SK-N-SH (cell line): ENCODE measurements at regions of chr5 and their contacts with region 1.

Region 1: DNA sequence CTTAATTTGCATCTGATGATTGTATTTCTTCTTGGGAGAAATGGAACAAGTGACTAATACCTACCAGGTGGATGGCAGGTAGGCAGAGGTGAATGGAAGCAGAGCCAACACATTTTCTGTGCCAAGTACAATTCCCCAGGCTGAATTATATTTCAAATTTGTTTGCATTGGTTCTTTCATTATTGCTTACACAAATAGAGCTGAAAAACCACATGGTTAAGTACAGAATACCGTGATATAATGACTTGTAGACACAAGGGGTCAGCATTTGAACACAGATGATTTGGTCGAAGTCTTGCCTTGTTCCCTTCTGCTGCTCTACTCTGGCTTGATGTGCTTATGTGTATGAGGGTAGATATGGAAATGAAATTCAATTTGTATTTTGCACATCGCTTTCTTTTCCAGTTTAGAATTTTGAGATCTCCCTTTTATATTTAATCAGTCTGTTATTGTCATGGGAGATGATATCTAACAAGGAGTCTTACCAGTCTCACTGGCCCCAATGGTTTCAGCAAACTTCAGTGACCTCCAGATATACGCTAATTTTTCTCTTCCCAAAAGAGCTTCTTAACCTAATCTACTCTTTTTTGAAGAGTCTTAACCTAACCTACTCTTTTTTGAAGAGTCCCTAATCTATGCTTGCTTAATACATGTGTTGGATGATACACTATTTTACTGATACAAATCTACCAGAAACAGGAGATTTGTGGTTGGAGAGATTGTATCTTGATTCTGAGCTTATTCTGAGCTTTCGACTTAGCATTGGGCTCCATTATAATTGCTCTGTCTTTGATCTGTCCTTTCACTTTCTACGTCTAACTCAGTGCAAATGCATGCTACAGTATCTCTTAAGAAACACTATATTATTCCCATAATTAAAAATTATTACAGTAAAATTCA is 88.1 kb downstream of the PCSK1 start:
- DNase-seq: peak; percentile 36
- H3K4me3 ChIP-seq: no peak overlapping the region; a peak in 1 of 4 replicates
- H3K27ac ChIP-seq: no peak overlapping the region
- H3K4me1 ChIP-seq: peaks cover 0 to 17% of the 10 kb centered on the region in 2 experiments; a peak in 3 of 4 replicates
- H3K27me3 ChIP-seq: no peaks in the 10 kb centered on the region
- CTCF ChIP-seq: peak; percentile 75
- EP300 ChIP-seq: no peak
- RAD21 ChIP-seq: peak; percentile 97

Region 2: GRCh38 chr5:95858661-95859326 is 486.1 kb before region 1 on chr5:
- CTCF ChIA-PET with region 1: interaction called, 19 read pairs
- POLR2A ChIA-PET with region 1: no interaction called
- DNase-seq: peak; percentile 93
- H3K4me3 ChIP-seq: peak overlapping the region; percentile 36 to 45
- H3K27ac ChIP-seq: peak overlapping the region; percentile 71 to 95
- H3K4me1 ChIP-seq: peaks cover 2 to 35% of the 10 kb centered on the region in 2 experiments; a peak in 3 of 4 replicates
- H3K27me3 ChIP-seq: no peaks in the 10 kb centered on the region
- CTCF ChIP-seq: peak; percentile 98
- EP300 ChIP-seq: peak in 1 of 2 experiments; percentile 80; a peak in 1 of 4 replicates
- RAD21 ChIP-seq: peak; percentile 97

Region 3: GRCh38 chr5:96226941-96227552 is 117.9 kb before region 1 on chr5:
- CTCF ChIA-PET with region 1: no interaction called
- POLR2A ChIA-PET with region 1: no interaction called
- DNase-seq: no peak
- H3K4me3 ChIP-seq: peak overlapping the region in 1 of 2 experiments; percentile 21; a peak in 1 of 4 replicates
- H3K27ac ChIP-seq: peak overlapping the region; percentile 86 to 88
- H3K4me1 ChIP-seq: peaks cover 0 to 8% of the 10 kb centered on the region in 2 experiments; a peak in 1 of 4 replicates
- H3K27me3 ChIP-seq: no peaks in the 10 kb centered on the region
- CTCF ChIP-seq: no peak
- EP300 ChIP-seq: peak in 1 of 2 experiments; percentile 93; a peak in 2 of 4 replicates
- RAD21 ChIP-seq: no peak

Region 4: DNA sequence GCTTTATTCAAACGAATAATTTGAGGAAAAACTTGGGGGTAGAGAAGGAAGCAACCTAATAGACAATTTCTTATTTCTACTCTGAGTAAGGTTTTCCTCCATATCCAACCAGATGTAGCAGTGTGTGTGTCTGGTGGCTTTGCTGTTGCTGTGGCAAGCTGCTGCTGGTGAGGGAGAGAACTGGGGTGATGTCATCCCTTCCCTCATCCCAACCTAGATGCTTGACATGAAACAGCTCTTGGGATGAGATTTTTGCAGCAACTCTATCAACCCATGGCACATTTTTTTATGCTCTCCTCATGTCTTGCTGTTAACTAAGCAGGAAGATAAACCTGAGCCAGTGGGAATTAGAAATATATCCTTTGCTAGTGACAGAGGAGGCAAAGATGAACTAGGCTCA is 47.6 kb before region 1 on chr5:
- CTCF ChIA-PET with region 1: no interaction called
- POLR2A ChIA-PET with region 1: no interaction called
- DNase-seq: peak; percentile 30
- H3K4me3 ChIP-seq: no peak overlapping the region
- H3K27ac ChIP-seq: peak overlapping the region; percentile 28 to 50; a peak in 3 of 4 replicates
- H3K4me1 ChIP-seq: peaks cover 0 to 15% of the 10 kb centered on the region in 2 experiments; a peak in 2 of 4 replicates
- H3K27me3 ChIP-seq: no peaks in the 10 kb centered on the region
- CTCF ChIP-seq: no peak
- EP300 ChIP-seq: peak in 1 of 2 experiments; percentile 47; a peak in 1 of 4 replicates
- RAD21 ChIP-seq: no peak

Region 5: GRCh38 chr5:96439477-96440184 is 94.7 kb after region 1 on chr5:
- CTCF ChIA-PET with region 1: interaction called, 11 read pairs
- POLR2A ChIA-PET with region 1: no interaction called
- DNase-seq: no peak
- H3K4me3 ChIP-seq: no peak overlapping the region
- H3K27ac ChIP-seq: no peak overlapping the region
- H3K4me1 ChIP-seq: no peaks in the 10 kb centered on the region
- H3K27me3 ChIP-seq: no peaks in the 10 kb centered on the region
- CTCF ChIP-seq: no peak
- EP300 ChIP-seq: no peak
- RAD21 ChIP-seq: no peak

Region 6: GRCh38 chr5:96595300-96596090 is 250.6 kb after region 1 on chr5:
- CTCF ChIA-PET with region 1: interaction called, 112 read pairs
- POLR2A ChIA-PET with region 1: no interaction called
- DNase-seq: no peak
- H3K4me3 ChIP-seq: no peak overlapping the region
- H3K27ac ChIP-seq: no peak overlapping the region
- H3K4me1 ChIP-seq: peaks cover 0 to 4% of the 10 kb centered on the region in 2 experiments; a peak in 2 of 4 replicates
- H3K27me3 ChIP-seq: no peaks in the 10 kb centered on the region
- CTCF ChIP-seq: peak; percentile 53
- EP300 ChIP-seq: no peak
- RAD21 ChIP-seq: no peak

Region 7: DNA sequence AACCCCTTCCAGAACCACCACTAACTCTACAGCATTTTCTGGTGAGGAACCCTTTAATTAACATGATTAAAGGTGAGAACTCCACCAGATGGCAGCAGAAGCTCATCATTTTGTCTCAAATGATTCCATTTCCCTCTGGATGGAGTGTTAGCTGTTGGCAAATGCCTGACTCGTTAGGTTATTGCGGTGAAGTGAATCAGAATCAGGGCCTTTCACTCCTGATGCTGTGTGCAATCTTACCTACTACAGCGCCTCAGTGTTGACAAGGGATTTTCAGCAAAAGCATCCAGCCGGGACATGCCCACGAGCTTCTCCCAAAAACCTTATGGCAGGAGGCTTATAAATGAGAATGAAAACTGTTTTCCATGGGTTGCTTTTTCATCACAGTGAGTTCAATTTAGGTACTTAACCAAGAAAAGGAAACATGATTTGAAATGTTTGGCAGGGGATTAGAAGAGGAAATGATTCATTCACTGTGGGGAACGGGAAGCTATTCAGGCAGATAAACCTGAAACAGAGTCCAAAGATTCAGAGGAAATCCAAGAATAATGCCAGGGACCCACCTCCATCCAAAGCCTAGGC is 269.3 kb after region 1 on chr5:
- CTCF ChIA-PET with region 1: interaction called, 22 read pairs
- POLR2A ChIA-PET with region 1: no interaction called
- DNase-seq: peak; percentile 64
- H3K4me3 ChIP-seq: peak overlapping the region; percentile 10 to 58; a peak in 2 of 4 replicates
- H3K27ac ChIP-seq: peak overlapping the region; percentile 17 to 89; a peak in 3 of 4 replicates
- H3K4me1 ChIP-seq: peaks cover 0 to 16% of the 10 kb centered on the region in 2 experiments; a peak in 1 of 4 replicates
- H3K27me3 ChIP-seq: no peaks in the 10 kb centered on the region
- CTCF ChIP-seq: peak; percentile 71
- EP300 ChIP-seq: peak in 1 of 2 experiments; percentile 47; a peak in 1 of 4 replicates
- RAD21 ChIP-seq: peak; percentile 91

Region 8: GRCh38 chr5:96687812-96688453 is 343.0 kb after region 1 on chr5:
- CTCF ChIA-PET with region 1: interaction called, 17 read pairs
- POLR2A ChIA-PET with region 1: no interaction called
- DNase-seq: peak; percentile 68
- H3K4me3 ChIP-seq: peak overlapping the region in 1 of 2 experiments; percentile 40; a peak in 2 of 4 replicates
- H3K27ac ChIP-seq: no peak overlapping the region
- H3K4me1 ChIP-seq: peaks cover 3 to 15% of the 10 kb centered on the region in 2 experiments; a peak in 3 of 4 replicates
- H3K27me3 ChIP-seq: no peaks in the 10 kb centered on the region
- CTCF ChIP-seq: peak; percentile 80
- EP300 ChIP-seq: no peak
- RAD21 ChIP-seq: peak; percentile 89